Posterior vena cava (tissue), 2 donors: ENCODE measurements at regions of chr12 and their contacts with region 1.

Region 1: GRCh38 chr12:123571343-123571813 is 13.0 kb upstream of the TMED2 start:
- DNase-seq: peak; percentile 89

Region 2: DNA sequence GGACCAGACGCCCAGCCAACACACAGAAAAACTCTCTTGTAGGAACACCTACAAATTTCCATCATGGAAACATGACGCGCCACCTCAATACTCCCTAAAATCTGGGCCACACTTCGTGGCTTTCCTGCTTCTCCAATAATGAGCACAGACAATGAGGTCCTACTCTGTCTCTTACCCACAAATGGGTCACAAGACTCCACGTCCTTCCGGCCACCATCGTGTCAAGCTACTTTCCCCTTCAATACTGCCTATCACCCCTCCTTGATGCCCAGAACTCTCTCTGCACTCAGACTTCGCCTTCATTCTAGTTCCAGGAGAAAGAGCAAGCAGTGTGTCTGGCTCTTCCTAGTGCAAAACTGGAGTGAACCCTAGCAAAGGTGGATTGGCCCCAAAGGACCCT is 234.8 kb before region 1 on chr12:
- intact Hi-C with region 1: no loop called
- DNase-seq: no peak

Region 3: DNA sequence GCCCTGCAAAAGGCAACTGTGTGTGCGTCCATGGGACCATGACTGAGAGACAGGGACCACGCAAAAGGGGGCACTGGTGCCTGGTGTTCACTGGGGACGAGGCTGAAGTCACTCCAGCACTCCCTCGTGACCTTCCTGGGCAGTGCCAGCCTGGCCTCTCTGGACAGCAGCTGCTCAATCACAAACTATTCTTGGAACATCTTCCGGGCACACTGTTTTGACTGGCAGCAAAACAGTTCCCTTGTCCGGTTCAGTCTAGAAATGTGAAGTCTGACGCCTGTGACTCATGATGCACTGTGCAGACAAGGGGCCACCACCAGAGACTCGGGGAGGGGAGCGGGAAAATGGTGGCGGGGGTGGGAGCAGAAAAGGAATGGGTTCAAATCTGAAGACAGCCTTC is 92.6 kb before region 1 on chr12:
- intact Hi-C with region 1: loop called in 1 of 2 experiments (anchors 2 kb)
- DNase-seq: no peak